B cell (primary cell): ENCODE measurements at regions of chr1 and their contacts with region 1.

Region 1: DNA sequence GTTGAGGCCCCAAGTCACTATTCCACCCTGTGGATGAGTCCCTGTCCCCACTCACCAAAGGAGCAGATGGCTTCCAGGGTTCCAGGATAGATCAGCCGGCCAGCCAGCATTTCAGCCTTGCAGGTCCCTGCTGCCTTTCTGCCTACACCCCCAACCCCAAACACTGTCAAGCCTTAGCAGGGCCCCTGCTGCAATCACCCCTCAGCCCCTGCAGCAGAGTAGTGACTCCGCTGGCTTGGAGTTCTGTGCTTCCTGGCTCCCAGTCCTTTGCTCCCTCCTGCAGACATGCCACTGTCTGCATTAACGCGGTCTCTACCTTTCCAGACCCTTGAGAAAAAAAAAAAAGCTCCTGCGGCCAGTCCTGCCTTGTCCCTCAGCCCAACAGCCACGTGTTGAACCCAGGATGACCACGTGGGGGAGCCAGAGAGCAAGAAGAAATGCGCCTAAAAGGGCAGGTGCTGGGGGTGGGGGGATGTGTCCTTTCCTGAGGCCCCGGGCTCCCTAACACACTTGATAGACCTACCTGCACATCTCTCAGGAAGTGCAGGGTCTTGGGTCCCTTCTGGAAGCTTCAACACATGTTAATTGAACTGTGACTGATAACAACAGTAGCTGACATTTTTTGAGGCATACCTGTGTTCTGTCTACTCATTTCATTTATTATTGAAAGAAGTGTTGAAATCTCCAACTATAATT is 37.4 kb downstream of the RASSF5 start:
- DNase-seq: peak; percentile 84
- ATAC-seq: peak; percentile 95
- H3K4me3 ChIP-seq: no peak overlapping the region
- H3K4me3 Mint-ChIP-seq: no peak overlapping the region
- H3K27ac ChIP-seq: no peak overlapping the region
- H3K27ac Mint-ChIP-seq: no peak overlapping the region
- H3K4me1 ChIP-seq: peaks cover 0 to 6% of the 10 kb centered on the region in 2 donors
- H3K4me1 Mint-ChIP-seq: peaks cover 7% of the 10 kb centered on the region
- H3K27me3 ChIP-seq: no peaks in the 10 kb centered on the region
- H3K27me3 Mint-ChIP-seq: no peaks in the 10 kb centered on the region
- CTCF ChIP-seq: peak; percentile 92

Region 2: DNA sequence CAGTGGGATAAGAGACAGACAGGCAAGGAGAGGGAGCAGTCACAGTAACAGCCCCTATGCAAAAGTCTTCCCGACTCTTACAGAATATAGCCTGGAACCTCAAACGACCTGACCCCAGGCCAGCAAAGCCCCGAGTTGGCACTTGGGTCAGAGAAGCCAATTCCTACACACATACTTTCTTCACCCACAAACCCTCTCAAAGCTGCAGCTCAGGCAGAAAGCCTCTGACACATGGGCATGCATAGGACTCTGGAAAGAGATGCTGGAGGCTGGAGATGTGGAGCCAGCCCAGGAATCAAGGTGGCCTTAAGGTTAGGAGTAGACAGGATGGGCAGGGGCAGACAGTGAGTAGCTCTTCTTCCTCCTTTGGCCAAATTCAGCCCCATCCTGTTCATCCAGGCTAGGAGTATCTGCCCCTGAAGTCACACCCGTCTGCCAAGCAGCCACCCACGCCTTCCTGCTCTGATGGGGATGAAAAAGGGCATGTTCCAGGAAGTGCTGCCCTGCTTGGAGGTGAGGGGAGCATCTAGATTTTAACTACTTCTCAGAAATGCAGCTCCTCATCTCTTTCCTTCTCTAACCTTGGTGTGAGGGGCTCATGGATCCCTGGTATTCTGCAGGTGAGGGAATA is 739.5 kb before region 1 on chr1:
- CTCF ChIA-PET with region 1: no interaction called
- POLR2A ChIA-PET with region 1: no interaction called
- intact Hi-C with region 1: no loop called
- DNase-seq: no peak
- ATAC-seq: no peak
- H3K4me3 ChIP-seq: no peak overlapping the region
- H3K4me3 Mint-ChIP-seq: no peak overlapping the region
- H3K27ac ChIP-seq: peak overlapping the region in 1 of 2 donors; percentile 1
- H3K27ac Mint-ChIP-seq: no peak overlapping the region
- H3K4me1 ChIP-seq: peaks cover 34 to 37% of the 10 kb centered on the region in 2 donors
- H3K4me1 Mint-ChIP-seq: peaks cover 54% of the 10 kb centered on the region
- H3K27me3 ChIP-seq: no peaks in the 10 kb centered on the region
- H3K27me3 Mint-ChIP-seq: no peaks in the 10 kb centered on the region
- CTCF ChIP-seq: no peak

Region 3: GRCh38 chr1:206479183-206480125 is 65.3 kb before region 1 on chr1:
- CTCF ChIA-PET with region 1: interaction called, 47 read pairs
- POLR2A ChIA-PET with region 1: no interaction called
- intact Hi-C with region 1: no loop called
- DNase-seq: peak; percentile 80
- ATAC-seq: peak; percentile 79
- H3K4me3 ChIP-seq: no peak overlapping the region
- H3K4me3 Mint-ChIP-seq: no peak overlapping the region
- H3K27ac ChIP-seq: no peak overlapping the region
- H3K27ac Mint-ChIP-seq: peak overlapping the region; percentile 42
- H3K4me1 ChIP-seq: no peaks in the 10 kb centered on the region
- H3K4me1 Mint-ChIP-seq: peaks cover 4% of the 10 kb centered on the region
- H3K27me3 ChIP-seq: no peaks in the 10 kb centered on the region
- H3K27me3 Mint-ChIP-seq: no peaks in the 10 kb centered on the region
- CTCF ChIP-seq: peak; percentile 78

Region 4: GRCh38 chr1:206507284-206508129 is 37.2 kb before region 1 on chr1 and contains the start of gene RASSF5:
- CTCF ChIA-PET with region 1: interaction called, 19 read pairs
- POLR2A ChIA-PET with region 1: no interaction called
- intact Hi-C with region 1: no loop called
- DNase-seq: peak; percentile 84
- ATAC-seq: peak; percentile 91
- H3K4me3 ChIP-seq: peak within 1 kb of the TSS; percentile 28 to 75 (median 64)
- H3K4me3 Mint-ChIP-seq: peak within 1 kb of the TSS; percentile 86
- H3K27ac ChIP-seq: no peak within 1 kb of the TSS
- H3K27ac Mint-ChIP-seq: peak within 1 kb of the TSS; percentile 10
- H3K4me1 ChIP-seq: peaks cover 19 to 21% of the 10 kb centered on the region in 2 donors
- H3K4me1 Mint-ChIP-seq: peaks cover 28% of the 10 kb centered on the region
- H3K27me3 ChIP-seq: peaks cover 0 to 50% (median 19%) of the 10 kb centered on the region in 4 experiments
- H3K27me3 Mint-ChIP-seq: peaks cover 32% of the 10 kb centered on the region
- CTCF ChIP-seq: no peak
- total RNA-seq, gene RASSF5: 144 and 146 TPM in 2 replicates

Region 5: GRCh38 chr1:206563367-206564207 is 18.9 kb after region 1 on chr1:
- CTCF ChIA-PET with region 1: interaction called, 172 read pairs
- POLR2A ChIA-PET with region 1: interaction called, 5 read pairs
- intact Hi-C with region 1: no loop called
- DNase-seq: no peak
- ATAC-seq: no peak
- H3K4me3 ChIP-seq: peak overlapping the region in 3 of 5 experiments; percentile 6 to 15 (median 11)
- H3K4me3 Mint-ChIP-seq: peak overlapping the region; percentile 78
- H3K27ac ChIP-seq: peak overlapping the region; percentile 60 to 77
- H3K27ac Mint-ChIP-seq: peak overlapping the region; percentile 92
- H3K4me1 ChIP-seq: peaks cover 86 to 98% of the 10 kb centered on the region in 2 donors
- H3K4me1 Mint-ChIP-seq: peaks cover 94% of the 10 kb centered on the region
- H3K27me3 ChIP-seq: no peaks in the 10 kb centered on the region
- H3K27me3 Mint-ChIP-seq: no peaks in the 10 kb centered on the region
- CTCF ChIP-seq: no peak

Region 6: GRCh38 chr1:206590025-206590758 is 45.5 kb after region 1 on chr1:
- CTCF ChIA-PET with region 1: interaction called, 1,018 read pairs
- POLR2A ChIA-PET with region 1: no interaction called
- intact Hi-C with region 1: no loop called
- DNase-seq: no peak
- ATAC-seq: peak; percentile 33
- H3K4me3 ChIP-seq: no peak overlapping the region
- H3K4me3 Mint-ChIP-seq: no peak overlapping the region
- H3K27ac ChIP-seq: peak overlapping the region in 1 of 2 donors; percentile 9
- H3K27ac Mint-ChIP-seq: peak overlapping the region; percentile 73
- H3K4me1 ChIP-seq: no peaks in the 10 kb centered on the region
- H3K4me1 Mint-ChIP-seq: peaks cover 7% of the 10 kb centered on the region
- H3K27me3 ChIP-seq: no peaks in the 10 kb centered on the region
- H3K27me3 Mint-ChIP-seq: no peaks in the 10 kb centered on the region
- CTCF ChIP-seq: peak; percentile 66